K562 (cell line): ENCODE measurements at regions of chr9 and their contacts with region 1.

Region 1: DNA sequence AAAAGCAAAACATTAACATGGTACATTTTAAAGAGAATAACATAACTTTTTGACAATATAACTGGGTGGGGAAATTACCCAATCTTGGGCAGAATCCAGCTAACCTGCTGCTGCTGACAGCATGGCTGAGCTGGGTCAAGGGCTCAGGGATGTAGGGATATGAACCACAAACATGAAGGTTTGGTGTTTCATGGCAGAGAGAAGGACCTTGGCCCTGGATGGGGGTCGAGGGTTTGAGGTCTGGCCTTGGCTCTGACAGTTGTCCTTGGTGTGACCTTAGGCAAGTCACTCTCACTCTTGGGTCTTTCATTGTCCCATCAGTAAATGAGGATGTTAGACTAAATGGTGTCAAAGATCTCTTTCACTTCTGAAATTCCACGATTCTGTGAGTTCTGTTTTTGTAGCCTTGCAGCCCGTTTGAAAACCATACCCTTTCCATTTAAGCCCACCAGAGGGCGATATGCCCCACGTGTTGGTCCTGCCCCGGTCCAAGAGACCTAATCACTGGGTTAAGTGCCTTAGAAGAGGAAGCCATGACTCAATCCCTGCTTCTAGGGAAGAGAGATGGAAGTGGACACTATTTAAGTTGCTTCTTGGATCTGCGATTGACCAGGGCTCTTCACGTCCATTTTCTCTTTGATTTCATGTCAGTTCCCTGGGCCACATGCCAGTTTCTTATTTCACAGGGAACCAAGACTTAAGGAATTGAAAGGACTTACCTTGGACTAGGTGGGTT is 56.8 kb upstream of the TEX48 start:
- DNase-seq: peak; percentile 68 to 75 (median 72)
- ATAC-seq: peak; percentile 97
- H3K4me3 ChIP-seq: no peak overlapping the region
- H3K27ac ChIP-seq: no peak overlapping the region
- H3K4me1 ChIP-seq: no peaks in the 10 kb centered on the region
- H3K27me3 ChIP-seq: no peaks in the 10 kb centered on the region
- CTCF ChIP-seq: peak; percentile 74 to 87 (median 83)
- EP300 ChIP-seq: no peak
- POLR2A ChIP-seq: no peak
- RAD21 ChIP-seq: peak; percentile 89 to 94

Region 2: GRCh38 chr9:114574438-114574837 is 164.3 kb before region 1 on chr9:
- CTCF ChIA-PET with region 1: no interaction called
- POLR2A ChIA-PET with region 1: no interaction called
- in situ Hi-C with region 1: no loop called
- intact Hi-C with region 1: no loop called
- DNase-seq: no peak
- ATAC-seq: no peak
- H3K4me3 ChIP-seq: no peak overlapping the region
- H3K27ac ChIP-seq: no peak overlapping the region
- H3K4me1 ChIP-seq: no peaks in the 10 kb centered on the region; a peak in 1 of 5 replicates
- H3K27me3 ChIP-seq: peaks cover 0 to 5% of the 10 kb centered on the region in 2 experiments; a peak in 3 of 5 replicates
- CTCF ChIP-seq: no peak
- EP300 ChIP-seq: no peak
- POLR2A ChIP-seq: no peak
- RAD21 ChIP-seq: no peak

Region 3: DNA sequence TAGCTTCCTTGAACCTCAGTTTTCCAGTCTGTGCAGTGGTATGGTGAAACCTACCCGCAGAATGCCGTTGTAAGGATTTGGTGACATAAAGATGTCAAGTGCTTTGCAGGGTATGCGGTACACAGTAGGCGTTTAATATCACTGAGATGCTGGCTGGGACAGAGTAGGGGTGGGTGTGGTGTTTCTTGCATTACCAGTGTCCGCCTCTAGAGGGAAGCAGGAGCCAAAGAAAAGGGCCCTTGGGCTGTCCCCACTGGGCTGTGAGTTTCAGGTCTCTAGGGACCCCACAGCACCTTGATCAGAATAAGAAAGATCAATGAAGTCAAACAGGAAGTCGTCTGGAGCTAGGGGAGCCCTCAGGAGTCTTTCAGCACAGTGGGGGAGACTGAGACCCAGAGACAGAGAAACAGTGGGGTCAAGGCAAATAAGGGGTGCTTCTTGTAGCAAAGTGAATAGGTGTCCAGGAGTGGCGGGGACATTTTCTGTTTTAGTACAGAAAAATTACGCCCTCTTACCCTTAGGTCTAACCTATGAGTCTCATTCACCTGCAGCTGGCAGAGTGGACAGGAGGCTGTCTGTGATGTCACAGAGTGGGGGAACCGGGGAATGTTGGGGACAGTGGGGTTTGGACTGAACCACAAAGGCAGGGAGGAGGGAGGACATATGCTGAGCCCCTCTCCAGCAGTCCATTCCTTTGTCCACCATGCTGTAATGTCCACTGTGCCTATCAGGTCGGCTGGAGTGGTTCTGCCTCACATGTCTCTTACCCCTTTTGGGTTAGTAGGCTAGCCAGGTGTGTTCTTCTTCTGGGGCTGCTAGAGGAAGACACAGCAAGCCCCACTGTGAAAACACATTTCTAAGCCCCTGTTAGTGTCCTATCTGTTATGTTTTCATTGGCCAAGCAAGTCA is 76.4 kb before region 1 on chr9:
- CTCF ChIA-PET with region 1: interaction called, 5 read pairs
- POLR2A ChIA-PET with region 1: no interaction called
- in situ Hi-C with region 1: no loop called
- intact Hi-C with region 1: loop called (anchors 5 kb)
- DNase-seq: peak; percentile 66 to 82 (median 79)
- ATAC-seq: peak; percentile 95
- H3K4me3 ChIP-seq: no peak overlapping the region
- H3K27ac ChIP-seq: no peak overlapping the region
- H3K4me1 ChIP-seq: no peaks in the 10 kb centered on the region
- H3K27me3 ChIP-seq: peaks cover 13 to 59% of the 10 kb centered on the region in 2 experiments; a peak in 4 of 5 replicates
- CTCF ChIP-seq: peak; percentile 70 to 89 (median 80)
- EP300 ChIP-seq: no peak
- POLR2A ChIP-seq: no peak
- RAD21 ChIP-seq: peak; percentile 47 to 73; a peak in 3 of 4 replicates

Region 4: DNA sequence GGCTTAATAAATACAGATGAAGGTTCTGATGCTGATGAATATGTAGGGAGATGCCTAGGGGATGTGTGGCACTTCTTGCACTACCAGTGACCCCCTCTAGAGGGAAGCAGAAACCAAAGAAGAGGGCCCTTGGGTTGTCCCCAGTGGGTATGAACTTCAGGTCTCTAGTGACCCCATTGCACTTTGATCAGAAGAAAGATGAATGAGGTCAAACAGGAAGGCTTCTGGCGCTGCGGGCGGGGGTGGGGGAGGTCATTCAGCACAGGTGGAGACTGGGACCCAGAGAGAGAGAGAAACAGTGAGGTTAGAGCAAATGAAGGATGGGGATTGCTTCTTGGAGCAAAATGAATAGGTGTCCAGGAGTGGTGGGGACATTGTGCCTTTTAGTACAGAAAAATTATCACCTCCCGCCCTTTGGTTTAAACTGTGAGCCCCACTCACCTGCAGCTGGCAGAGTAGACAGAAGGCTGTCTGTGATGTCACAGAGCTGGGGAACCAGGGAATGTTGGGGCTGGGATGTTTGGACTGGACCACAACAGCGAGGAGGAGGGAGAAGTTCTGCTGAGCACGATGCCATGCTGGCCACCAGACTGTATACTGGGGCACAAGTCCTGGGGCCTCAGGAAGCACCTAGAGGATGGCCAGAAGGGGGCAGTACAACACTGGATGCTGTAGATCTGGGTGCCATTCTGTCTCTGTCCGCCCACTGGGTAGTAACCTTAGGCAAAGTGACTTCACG is 57.0 kb before region 1 on chr9 and contains the start of gene TEX48:
- CTCF ChIA-PET with region 1: no interaction called
- POLR2A ChIA-PET with region 1: no interaction called
- in situ Hi-C with region 1: no loop called
- intact Hi-C with region 1: loop called (anchors 1 kb)
- DNase-seq: peak; percentile 65 to 77 (median 75)
- ATAC-seq: peak; percentile 94
- H3K4me3 ChIP-seq: no peak within 1 kb of the TSS
- H3K27ac ChIP-seq: no peak within 1 kb of the TSS
- H3K4me1 ChIP-seq: peaks cover 0 to 3% of the 10 kb centered on the region in 2 experiments; a peak in 1 of 5 replicates
- H3K27me3 ChIP-seq: peaks cover 0 to under 1% of the 10 kb centered on the region in 2 experiments; a peak in 2 of 5 replicates
- CTCF ChIP-seq: peak; percentile 67 to 79 (median 78)
- EP300 ChIP-seq: no peak
- POLR2A ChIP-seq: no peak
- RAD21 ChIP-seq: peak; percentile 39 to 71
- polyA plus RNA-seq, gene TEX48: not detected

Region 5: GRCh38 chr9:114852050-114852594 is 113.4 kb after region 1 on chr9:
- CTCF ChIA-PET with region 1: no interaction called
- POLR2A ChIA-PET with region 1: no interaction called
- in situ Hi-C with region 1: no loop called
- intact Hi-C with region 1: no loop called
- DNase-seq: no peak
- ATAC-seq: no peak
- H3K4me3 ChIP-seq: no peak overlapping the region
- H3K27ac ChIP-seq: no peak overlapping the region
- H3K4me1 ChIP-seq: no peaks in the 10 kb centered on the region
- H3K27me3 ChIP-seq: no peaks in the 10 kb centered on the region
- CTCF ChIP-seq: no peak
- EP300 ChIP-seq: no peak
- POLR2A ChIP-seq: no peak
- RAD21 ChIP-seq: no peak